HCT116 (cell line): ENCODE measurements at regions of chr2 and their contacts with region 1.

Region 1: GRCh38 chr2:226984750-226985582 is 149.1 kb downstream of the RHBDD1 start:
- DNase-seq: peak; percentile 56
- ATAC-seq: peak; percentile 65
- H3K4me3 ChIP-seq: no peak overlapping the region
- H3K27ac ChIP-seq: peak overlapping the region; percentile 57
- H3K4me1 ChIP-seq: peaks cover 47 to 50% of the 10 kb centered on the region in 2 experiments
- H3K27me3 ChIP-seq: no peaks in the 10 kb centered on the region
- CTCF ChIP-seq: peak; percentile 56 to 83 (median 68); a peak in 5 of 6 replicates
- POLR2A ChIP-seq: no peak
- RAD21 ChIP-seq: peak; percentile 95

Region 2: DNA sequence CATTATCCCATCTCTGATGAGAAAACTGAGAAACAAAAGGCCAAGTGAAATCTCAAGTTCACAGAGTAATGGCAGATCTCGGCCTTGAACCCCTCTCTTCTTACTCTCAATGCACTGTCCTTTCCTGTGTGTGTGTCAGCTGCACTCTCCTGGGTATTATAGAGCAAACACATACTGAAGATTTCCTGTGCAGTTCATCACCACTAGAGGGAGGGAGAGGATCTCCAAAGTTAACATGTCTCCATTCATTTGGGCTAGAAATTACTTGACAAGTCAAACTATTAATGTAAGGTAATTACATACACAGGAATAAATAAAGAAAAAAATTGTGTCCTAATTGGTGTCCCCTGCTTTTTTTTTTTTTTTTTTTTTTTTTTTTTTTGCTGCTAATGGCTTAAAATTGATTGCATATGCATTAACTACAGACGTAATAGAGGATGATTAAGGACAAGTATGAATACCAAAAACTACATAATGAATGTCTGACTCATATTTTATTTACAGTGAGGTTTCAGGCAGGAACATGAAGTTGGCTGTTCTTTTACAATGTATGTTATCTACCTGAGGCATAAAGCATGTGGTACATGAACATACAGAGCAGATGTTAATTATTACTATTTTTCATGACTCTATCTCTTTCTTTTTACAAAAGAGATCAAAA is 1316.2 kb before region 1 on chr2:
- CTCF ChIA-PET with region 1: interaction called, 11 read pairs
- POLR2A ChIA-PET with region 1: no interaction called
- RAD21 ChIA-PET with region 1: interaction called in 1 of 2 experiments, 11 read pairs
- intact Hi-C with region 1: loop called (anchors 1 kb)
- DNase-seq: peak; percentile 72
- ATAC-seq: peak; percentile 79
- H3K4me3 ChIP-seq: no peak overlapping the region
- H3K27ac ChIP-seq: peak overlapping the region; percentile 67; the same call in 1 of the 2 replicates
- H3K4me1 ChIP-seq: peaks cover 21 to 32% of the 10 kb centered on the region in 2 experiments
- H3K27me3 ChIP-seq: no peaks in the 10 kb centered on the region
- CTCF ChIP-seq: peak; percentile 74 to 91 (median 80)
- POLR2A ChIP-seq: no peak
- RAD21 ChIP-seq: peak; percentile 86

Region 3: DNA sequence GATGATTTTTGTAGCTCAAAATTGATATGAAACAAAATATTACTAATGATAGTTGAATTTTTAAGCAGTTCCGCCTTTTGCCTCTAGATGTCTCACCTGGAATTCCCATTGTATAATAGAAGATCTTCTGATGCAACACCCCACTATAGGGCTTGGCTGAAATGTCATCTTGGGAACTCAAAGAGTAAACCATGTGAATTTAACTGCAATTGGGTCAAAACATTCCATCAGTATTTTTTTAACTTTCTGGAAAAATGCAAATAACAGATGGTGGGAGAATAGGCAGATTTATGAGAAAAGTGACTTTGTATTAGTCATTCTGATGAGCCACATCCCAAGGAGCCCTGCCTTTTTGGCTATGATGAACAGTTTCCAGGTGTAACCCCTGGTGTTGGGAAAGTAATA is 1095.5 kb before region 1 on chr2:
- CTCF ChIA-PET with region 1: no interaction called
- POLR2A ChIA-PET with region 1: no interaction called
- RAD21 ChIA-PET with region 1: no interaction called
- intact Hi-C with region 1: loop called (anchors 5 kb)
- DNase-seq: peak; percentile 60
- ATAC-seq: peak; percentile 76
- H3K4me3 ChIP-seq: no peak overlapping the region
- H3K27ac ChIP-seq: peak overlapping the region; percentile 33; the same call in 1 of the 2 replicates
- H3K4me1 ChIP-seq: peaks cover 8 to 20% of the 10 kb centered on the region in 2 experiments; a peak in 3 of 4 replicates
- H3K27me3 ChIP-seq: no peaks in the 10 kb centered on the region
- CTCF ChIP-seq: peak; percentile 47 to 73 (median 65); a peak in 5 of 6 replicates
- POLR2A ChIP-seq: no peak
- RAD21 ChIP-seq: peak; percentile 90

Region 4: DNA sequence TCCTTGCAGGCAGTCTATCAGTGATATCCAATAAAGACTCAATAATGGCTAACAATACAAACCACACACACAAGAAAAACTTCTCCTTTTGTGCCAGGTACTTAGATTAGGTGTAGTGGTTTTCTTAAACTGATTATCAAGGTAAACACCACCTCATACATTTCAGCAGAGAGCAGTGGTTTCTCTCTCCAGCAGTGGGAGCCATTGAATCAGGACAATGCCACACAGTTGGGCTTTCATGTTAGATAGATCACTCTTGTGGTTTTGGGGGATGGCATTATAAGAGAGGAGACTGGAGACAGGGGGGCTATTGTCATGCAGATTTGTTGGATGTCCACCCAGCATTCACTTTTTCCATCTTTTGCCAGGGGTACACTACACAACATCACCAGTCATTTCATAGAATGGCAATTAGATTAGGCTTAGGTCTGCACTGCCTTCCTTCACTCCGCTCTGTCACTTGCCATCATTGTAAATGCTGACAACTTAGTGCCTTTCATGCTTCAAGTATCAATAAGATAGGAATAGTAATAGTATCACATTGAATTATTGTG is 171.7 kb before region 1 on chr2:
- CTCF ChIA-PET with region 1: interaction called, 4 read pairs
- POLR2A ChIA-PET with region 1: no interaction called
- RAD21 ChIA-PET with region 1: no interaction called
- intact Hi-C with region 1: loop called (anchors 1 kb)
- DNase-seq: no peak
- ATAC-seq: peak; percentile 74
- H3K4me3 ChIP-seq: no peak overlapping the region
- H3K27ac ChIP-seq: no peak overlapping the region
- H3K4me1 ChIP-seq: no peaks in the 10 kb centered on the region
- H3K27me3 ChIP-seq: no peaks in the 10 kb centered on the region
- CTCF ChIP-seq: peak; percentile 49 to 64 (median 63); a peak in 5 of 6 replicates
- POLR2A ChIP-seq: no peak
- RAD21 ChIP-seq: peak; percentile 79

Region 5: GRCh38 chr2:226943862-226944620 is 40.9 kb before region 1 on chr2:
- CTCF ChIA-PET with region 1: no interaction called
- POLR2A ChIA-PET with region 1: no interaction called
- RAD21 ChIA-PET with region 1: no interaction called
- intact Hi-C with region 1: no loop called
- DNase-seq: no peak
- ATAC-seq: no peak
- H3K4me3 ChIP-seq: no peak overlapping the region
- H3K27ac ChIP-seq: no peak overlapping the region
- H3K4me1 ChIP-seq: no peaks in the 10 kb centered on the region
- H3K27me3 ChIP-seq: no peaks in the 10 kb centered on the region
- CTCF ChIP-seq: no peak
- POLR2A ChIP-seq: no peak
- RAD21 ChIP-seq: no peak